ENCODE measurements at regions of chr17 and their contacts with region 1.

Region 1: DNA sequence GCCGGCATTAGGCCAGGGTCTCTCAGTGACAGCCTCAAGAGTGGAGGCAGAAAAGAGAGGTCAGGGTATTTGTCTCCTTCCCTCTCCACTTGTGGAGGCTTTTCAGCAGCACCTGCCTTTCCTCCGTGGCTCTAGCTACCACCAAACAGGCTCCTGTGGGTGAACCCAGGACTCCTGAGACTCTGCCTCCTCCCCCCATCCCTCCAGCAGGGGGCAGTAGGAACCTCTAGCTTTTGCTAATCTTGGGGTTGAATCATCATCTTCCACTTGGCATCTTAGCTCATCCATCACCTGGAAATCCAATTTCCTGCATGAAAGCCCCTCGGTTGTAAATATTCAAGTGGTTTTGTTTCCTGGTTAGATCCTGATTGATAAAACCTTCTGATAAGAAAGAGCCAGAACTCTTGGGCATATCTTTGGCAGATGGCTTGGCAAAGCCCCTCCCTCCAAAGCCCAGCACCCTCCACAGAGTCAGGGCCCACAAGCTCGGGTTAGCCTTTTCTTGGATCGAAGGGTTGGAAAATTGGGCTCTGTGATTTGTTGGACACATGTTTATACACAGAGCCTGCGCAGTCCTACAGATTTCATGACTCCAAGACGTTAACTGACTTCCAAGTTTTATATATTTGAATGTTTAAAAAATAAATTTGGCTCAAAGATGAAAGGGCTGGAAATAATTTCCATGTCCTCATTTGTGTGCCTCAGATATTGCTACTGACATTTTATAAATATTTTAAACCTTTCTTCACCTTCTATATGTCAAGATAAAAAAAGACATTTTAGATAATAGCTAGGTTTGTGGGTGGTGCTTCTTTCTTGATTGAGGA is 322.1 kb downstream of the MAP2K4 start:
- DNase-seq: peak; percentile 89
- ATAC-seq: peak; percentile 90
- H3K4me3 Mint-ChIP-seq: no peak overlapping the region
- H3K27ac Mint-ChIP-seq: no peak overlapping the region
- H3K4me1 Mint-ChIP-seq: peaks cover 15% of the 10 kb centered on the region
- H3K27me3 Mint-ChIP-seq: no peaks in the 10 kb centered on the region
- CTCF ChIP-seq: peak; percentile 86

Region 2: GRCh38 chr17:12256380-12256995 is 86.3 kb before region 1 on chr17:
- CTCF ChIA-PET with region 1: interaction called, 11 read pairs
- POLR2A ChIA-PET with region 1: no interaction called
- DNase-seq: no peak
- ATAC-seq: no peak
- H3K4me3 Mint-ChIP-seq: no peak overlapping the region
- H3K27ac Mint-ChIP-seq: no peak overlapping the region
- H3K4me1 Mint-ChIP-seq: no peaks in the 10 kb centered on the region
- H3K27me3 Mint-ChIP-seq: no peaks in the 10 kb centered on the region
- CTCF ChIP-seq: peak; percentile 77

Region 3: DNA sequence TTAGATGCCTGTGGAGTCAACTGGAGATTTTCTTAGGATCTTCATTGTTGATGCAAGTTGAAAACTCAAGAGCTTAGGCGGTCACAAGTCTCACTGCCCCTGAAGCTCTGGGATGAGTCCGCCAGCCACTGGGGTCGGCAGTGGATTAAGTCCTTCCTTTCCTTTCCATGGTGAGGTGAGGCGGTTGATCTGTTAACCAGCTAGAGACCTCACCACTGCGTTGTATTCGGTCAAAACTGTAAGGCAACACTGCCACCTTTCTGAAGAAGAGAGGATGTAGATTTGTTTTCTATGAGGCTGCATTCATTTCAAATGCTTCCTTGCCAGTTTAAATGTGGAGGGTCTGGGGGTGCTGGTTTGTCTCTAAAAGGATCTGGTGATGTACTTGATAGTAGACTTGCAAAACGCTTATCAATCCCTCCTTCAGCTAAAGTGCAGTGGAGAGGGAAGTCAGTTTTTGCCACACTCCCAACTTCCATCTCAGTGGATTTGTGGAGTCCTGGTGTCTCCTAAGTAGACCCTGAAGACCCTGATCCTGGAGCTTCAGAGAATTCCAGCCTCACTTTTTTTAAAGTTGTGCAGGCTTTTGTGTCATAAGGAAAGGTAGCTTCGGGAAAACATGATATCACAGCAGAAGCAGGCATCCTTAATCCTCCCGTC is 324.6 kb after region 1 on chr17:
- CTCF ChIA-PET with region 1: interaction called, 72 read pairs
- POLR2A ChIA-PET with region 1: interaction called, 7 read pairs
- DNase-seq: peak; percentile 42
- ATAC-seq: peak; percentile 43
- H3K4me3 Mint-ChIP-seq: peak overlapping the region; percentile 20; the same call in 1 of the 2 replicates
- H3K27ac Mint-ChIP-seq: no peak overlapping the region
- H3K4me1 Mint-ChIP-seq: peaks cover 10% of the 10 kb centered on the region; the same call in 1 of the 2 replicates
- H3K27me3 Mint-ChIP-seq: peaks cover 39% of the 10 kb centered on the region
- CTCF ChIP-seq: peak; percentile 23; the same call in 1 of the 2 replicates

Region 4: DNA sequence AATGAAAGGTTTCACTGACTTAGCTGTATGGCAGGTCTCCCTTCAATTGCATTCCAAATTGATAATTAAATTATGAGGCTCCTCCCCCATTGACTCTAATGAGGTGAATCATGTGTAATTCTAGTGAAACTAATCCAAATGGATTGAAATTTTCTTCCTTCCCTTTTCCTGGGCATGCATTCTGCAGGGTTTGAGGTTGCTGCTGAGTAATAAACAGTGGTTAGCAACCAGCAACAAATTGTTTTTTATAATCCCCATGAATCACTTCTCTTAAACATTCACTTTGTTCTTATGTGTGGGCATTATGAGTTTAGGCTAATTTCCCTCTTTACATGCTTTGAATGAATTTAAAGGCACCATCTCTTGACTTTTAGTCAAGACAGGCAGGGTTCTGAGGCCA is 366.2 kb after region 1 on chr17:
- CTCF ChIA-PET with region 1: no interaction called
- POLR2A ChIA-PET with region 1: no interaction called
- DNase-seq: no peak
- ATAC-seq: no peak
- H3K4me3 Mint-ChIP-seq: no peak overlapping the region
- H3K27ac Mint-ChIP-seq: no peak overlapping the region
- H3K4me1 Mint-ChIP-seq: peaks cover 16% of the 10 kb centered on the region
- H3K27me3 Mint-ChIP-seq: no peaks in the 10 kb centered on the region
- CTCF ChIP-seq: no peak